IMR-90 (cell line): ENCODE measurements at regions of chr5 and their contacts with region 1.

Region 1: GRCh38 chr5:139560752-139561654 is at the start of gene UBE2D2:
- DNase-seq: peak; percentile 98
- ATAC-seq: peak; percentile 95
- H3K4me3 ChIP-seq: peak within 1 kb of the TSS; percentile 84
- H3K27ac ChIP-seq: peak within 1 kb of the TSS; percentile 91
- H3K4me1 ChIP-seq: peaks cover 9% of the 10 kb centered on the region
- H3K27me3 ChIP-seq: no peaks in the 10 kb centered on the region
- CTCF ChIP-seq: no peak
- POLR2A ChIP-seq: 0 out of 2 replicates have a peak, but pooled peaks have one; percentile 81
- RAD21 ChIP-seq: no peak
- total RNA-seq, gene UBE2D2: 35.7 and 56.7 TPM in 2 replicates

Region 2: DNA sequence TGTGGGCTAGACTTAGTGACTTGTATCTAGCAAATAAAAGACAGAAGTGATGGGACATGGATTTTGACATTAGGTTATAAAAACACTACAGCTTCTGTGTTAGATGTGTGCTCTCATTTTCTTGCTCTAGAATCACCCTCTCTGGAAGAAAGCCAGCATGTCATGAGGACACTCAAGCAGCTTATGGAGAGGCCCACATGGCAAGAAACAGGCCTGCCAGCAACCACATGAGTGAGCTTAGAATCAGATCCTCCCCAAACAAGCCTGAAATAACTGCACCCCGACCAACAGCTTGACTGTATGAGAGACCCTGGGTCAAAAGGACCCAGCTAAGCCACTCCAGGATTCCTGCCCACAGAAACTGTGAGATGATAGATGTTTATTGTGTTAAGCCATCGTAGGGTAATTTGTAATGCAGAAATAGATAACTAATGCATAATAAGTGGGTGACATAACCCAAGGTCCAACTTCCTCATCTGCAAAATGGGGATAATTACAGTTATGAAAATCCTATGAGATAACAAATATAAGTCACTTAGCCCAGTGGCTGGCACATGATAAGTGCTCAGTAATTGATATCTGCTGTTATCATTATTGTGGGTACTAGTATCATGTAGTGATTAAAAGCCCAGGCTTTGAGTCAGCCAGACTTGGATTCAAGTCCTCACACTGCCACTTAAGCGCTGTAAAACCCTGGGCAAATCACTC is 1911.6 kb before region 1 on chr5:
- CTCF ChIA-PET with region 1: interaction called, 14 read pairs
- POLR2A ChIA-PET with region 1: no interaction called
- dilution Hi-C with region 1: no loop called
- in situ Hi-C with region 1: no loop called
- intact Hi-C with region 1: no loop called
- DNase-seq: peak; percentile 60
- ATAC-seq: no peak
- H3K4me3 ChIP-seq: no peak overlapping the region
- H3K27ac ChIP-seq: no peak overlapping the region
- H3K4me1 ChIP-seq: no peaks in the 10 kb centered on the region
- H3K27me3 ChIP-seq: no peaks in the 10 kb centered on the region
- CTCF ChIP-seq: no peak
- POLR2A ChIP-seq: no peak
- RAD21 ChIP-seq: no peak

Region 3: DNA sequence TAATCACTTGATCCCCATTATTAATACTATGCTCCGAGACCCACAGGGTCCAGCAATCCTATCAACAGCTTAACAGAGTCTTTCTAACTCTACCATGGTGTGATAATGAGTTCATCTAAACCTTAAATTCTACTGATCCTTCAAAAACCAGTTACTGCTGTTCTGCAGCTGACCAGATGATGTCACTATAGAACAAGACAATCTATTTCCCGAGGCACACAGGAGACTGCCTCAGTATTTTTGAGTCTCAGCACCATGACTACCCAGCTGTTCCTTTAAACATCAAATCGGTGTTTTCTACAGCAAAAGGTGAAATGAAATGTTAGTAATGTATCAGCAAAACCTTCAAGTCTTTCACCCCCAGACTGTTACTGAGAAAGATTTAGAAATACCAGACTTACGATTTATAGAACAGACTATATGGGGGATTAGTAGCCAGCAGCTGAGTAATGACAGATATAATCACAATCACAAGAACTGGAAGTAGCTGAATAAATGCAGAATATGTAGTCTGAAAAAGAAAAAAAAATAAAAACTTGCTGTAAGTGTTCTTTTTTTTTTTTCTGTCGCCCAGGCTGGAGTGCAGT is 138.6 kb before region 1 on chr5:
- CTCF ChIA-PET with region 1: interaction called, 7 read pairs
- POLR2A ChIA-PET with region 1: no interaction called
- dilution Hi-C with region 1: no loop called
- in situ Hi-C with region 1: no loop called
- intact Hi-C with region 1: loop called (anchors 5 kb)
- DNase-seq: peak; percentile 78
- ATAC-seq: peak; percentile 96
- H3K4me3 ChIP-seq: no peak overlapping the region
- H3K27ac ChIP-seq: no peak overlapping the region
- H3K4me1 ChIP-seq: peaks cover 7% of the 10 kb centered on the region; the same call in 1 of the 2 replicates
- H3K27me3 ChIP-seq: no peaks in the 10 kb centered on the region
- CTCF ChIP-seq: peak; percentile 94
- POLR2A ChIP-seq: 0 out of 2 replicates have a peak, but pooled peaks have one; percentile 34
- RAD21 ChIP-seq: peak; percentile 97

Region 4: GRCh38 chr5:139439013-139439903 is 121.7 kb before region 1 on chr5 and contains the start of gene DNAJC18:
- CTCF ChIA-PET with region 1: no interaction called
- POLR2A ChIA-PET with region 1: no interaction called
- dilution Hi-C with region 1: no loop called
- in situ Hi-C with region 1: no loop called
- intact Hi-C with region 1: loop called (anchors 5 kb)
- DNase-seq: peak; percentile 89
- ATAC-seq: peak; percentile 98
- H3K4me3 ChIP-seq: peak within 1 kb of the TSS; percentile 87
- H3K27ac ChIP-seq: peak within 1 kb of the TSS; percentile 86
- H3K4me1 ChIP-seq: peaks cover 10% of the 10 kb centered on the region
- H3K27me3 ChIP-seq: no peaks in the 10 kb centered on the region
- CTCF ChIP-seq: no peak
- POLR2A ChIP-seq: peak; percentile 78
- RAD21 ChIP-seq: no peak
- total RNA-seq, gene DNAJC18: 9.2 and 11.1 TPM in 2 replicates

Region 5: DNA sequence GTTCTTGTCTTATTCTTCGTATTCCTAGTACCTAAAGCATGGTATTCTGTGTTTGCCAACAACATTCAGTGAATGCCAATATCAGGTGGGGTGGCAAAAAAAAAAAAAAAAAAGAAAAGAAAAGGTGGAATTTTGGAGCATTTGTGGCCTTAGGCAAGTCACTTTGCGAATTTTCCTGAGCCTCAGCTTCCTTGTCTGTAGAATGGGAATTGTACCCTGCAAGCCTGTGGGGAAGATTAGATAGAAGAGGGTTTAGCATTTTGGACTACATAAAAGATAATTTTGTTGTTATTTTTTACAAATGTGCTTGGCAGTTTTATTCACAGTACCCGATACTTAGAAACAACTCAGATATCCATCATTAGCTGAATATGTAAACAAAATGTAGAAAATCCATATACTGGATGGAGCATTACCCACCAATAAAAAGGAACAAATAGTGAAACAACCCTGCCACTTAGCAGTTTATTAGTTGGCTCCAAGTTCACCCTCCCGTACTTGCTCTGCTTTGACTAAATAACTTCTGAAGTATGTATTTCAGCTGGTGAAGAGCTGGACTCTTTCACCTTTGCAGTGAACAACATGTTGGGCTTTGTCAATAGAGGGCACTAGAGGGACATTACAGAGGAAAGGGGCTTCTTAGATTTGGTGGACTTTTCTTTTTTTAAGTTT is 13.8 kb after region 1 on chr5:
- CTCF ChIA-PET with region 1: interaction called, 14 read pairs
- POLR2A ChIA-PET with region 1: no interaction called
- dilution Hi-C with region 1: no loop called
- in situ Hi-C with region 1: no loop called
- intact Hi-C with region 1: no loop called
- DNase-seq: peak; percentile 62
- ATAC-seq: peak; percentile 77
- H3K4me3 ChIP-seq: no peak overlapping the region
- H3K27ac ChIP-seq: no peak overlapping the region
- H3K4me1 ChIP-seq: peaks cover 11% of the 10 kb centered on the region
- H3K27me3 ChIP-seq: no peaks in the 10 kb centered on the region
- CTCF ChIP-seq: peak; percentile 63
- POLR2A ChIP-seq: no peak
- RAD21 ChIP-seq: peak; percentile 58